Activated CD4-positive, alpha-beta memory T cell treated with anti-CD3 and anti-CD28 coated beads, Interleukin-2, amount 10 ng/mL, durations not matched to agents 7 days and 5 days (primary cell): ENCODE measurements at regions of chr11 and their contacts with region 1.

Region 1: DNA sequence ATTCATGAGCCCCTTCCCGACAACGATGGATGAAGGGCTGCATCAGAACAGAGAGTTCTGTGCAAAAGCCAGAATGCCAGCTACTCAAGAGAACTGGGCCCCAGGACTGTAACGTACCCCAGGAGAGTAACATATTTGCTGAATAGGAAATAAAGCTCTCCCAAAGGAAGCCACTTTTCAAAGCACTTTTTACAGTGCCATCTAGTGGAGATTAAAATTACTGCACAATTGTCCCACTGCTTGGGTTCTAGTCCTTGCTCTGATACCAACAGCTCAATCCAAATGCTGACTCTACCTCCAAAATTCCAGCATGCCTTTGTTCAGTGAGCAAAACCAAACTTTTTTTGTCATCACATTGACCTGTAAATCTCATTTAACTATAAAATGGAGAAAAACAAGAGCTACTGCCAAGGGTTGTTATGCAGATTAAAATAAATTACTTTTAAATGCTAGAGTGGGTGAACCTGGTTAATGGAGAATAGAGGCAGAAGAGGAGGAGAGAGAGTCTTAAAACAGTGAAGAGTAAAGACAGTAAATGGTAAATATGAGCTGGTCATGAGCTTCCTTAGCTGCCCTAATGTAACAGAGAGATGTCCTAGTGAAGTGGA is 87.6 kb upstream of the FSHB start:
- DNase-seq: no peak
- H3K4me3 Mint-ChIP-seq: no peak overlapping the region
- H3K27ac Mint-ChIP-seq: no peak overlapping the region
- H3K4me1 Mint-ChIP-seq: no peaks in the 10 kb centered on the region
- H3K27me3 Mint-ChIP-seq: peaks cover 2% of the 10 kb centered on the region

Region 2: DNA sequence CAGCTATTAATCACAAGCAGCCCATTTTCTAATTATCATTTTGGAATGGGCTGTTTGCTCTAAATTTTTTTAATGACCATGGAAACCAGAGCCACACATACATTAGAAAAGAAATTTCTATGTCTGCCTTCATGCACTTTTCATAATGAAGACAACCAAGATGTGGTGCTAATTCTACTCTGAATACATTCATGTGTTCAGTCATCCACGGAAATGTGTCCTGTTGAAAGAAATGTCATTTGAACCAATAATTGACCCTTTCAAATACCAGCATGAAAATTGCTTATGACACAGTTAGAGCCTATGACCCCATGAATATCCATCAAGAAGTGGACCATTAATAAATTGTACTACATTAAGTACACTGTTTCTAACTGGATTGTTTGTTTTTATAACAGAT is 26.7 kb before region 1 on chr11:
- CTCF ChIA-PET with region 1: no interaction called
- POLR2A ChIA-PET with region 1: no interaction called
- DNase-seq: no peak
- H3K4me3 Mint-ChIP-seq: no peak overlapping the region
- H3K27ac Mint-ChIP-seq: no peak overlapping the region
- H3K4me1 Mint-ChIP-seq: no peaks in the 10 kb centered on the region
- H3K27me3 Mint-ChIP-seq: no peaks in the 10 kb centered on the region

Region 3: DNA sequence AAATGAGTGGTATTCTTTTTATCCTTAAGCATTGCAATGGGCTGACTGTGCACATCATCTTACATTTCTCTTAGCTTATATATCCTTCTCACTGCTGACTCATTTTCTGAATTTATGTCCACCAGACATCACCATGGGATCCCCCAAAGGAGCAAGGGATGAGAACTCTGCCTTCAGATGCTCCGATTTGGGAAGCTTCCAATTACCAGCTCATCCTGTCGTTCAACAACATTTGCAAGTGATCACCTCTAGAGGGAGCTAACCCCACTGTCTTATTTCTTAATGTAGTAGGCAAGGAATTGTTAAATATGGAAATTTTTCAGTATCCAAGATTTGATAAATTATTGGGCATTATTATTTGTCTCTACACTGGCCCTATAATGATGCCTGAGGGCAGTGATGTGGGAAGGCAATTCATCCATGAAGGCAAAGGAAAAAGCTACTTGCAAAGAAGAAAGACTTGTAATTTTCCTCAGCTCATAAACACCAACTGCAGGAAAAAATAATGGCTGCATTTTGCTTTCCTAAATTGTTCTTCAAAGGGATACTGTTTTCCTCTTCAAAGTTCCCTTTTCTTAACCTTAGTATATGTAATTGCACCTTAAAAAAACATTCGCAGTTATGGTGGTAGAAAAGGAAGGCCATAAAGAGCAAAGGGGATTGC is 14.8 kb before region 1 on chr11:
- CTCF ChIA-PET with region 1: interaction called, 34 read pairs
- POLR2A ChIA-PET with region 1: no interaction called
- DNase-seq: no peak
- H3K4me3 Mint-ChIP-seq: no peak overlapping the region
- H3K27ac Mint-ChIP-seq: no peak overlapping the region
- H3K4me1 Mint-ChIP-seq: no peaks in the 10 kb centered on the region
- H3K27me3 Mint-ChIP-seq: no peaks in the 10 kb centered on the region

Region 4: GRCh38 chr11:30155428-30155827 is 12.2 kb after region 1 on chr11:
- CTCF ChIA-PET with region 1: interaction called, 12 read pairs
- POLR2A ChIA-PET with region 1: no interaction called
- DNase-seq: no peak
- H3K4me3 Mint-ChIP-seq: no peak overlapping the region
- H3K27ac Mint-ChIP-seq: no peak overlapping the region
- H3K4me1 Mint-ChIP-seq: no peaks in the 10 kb centered on the region
- H3K27me3 Mint-ChIP-seq: no peaks in the 10 kb centered on the region

Region 5: GRCh38 chr11:30218278-30218677 is 75.1 kb after region 1 on chr11:
- CTCF ChIA-PET with region 1: no interaction called
- POLR2A ChIA-PET with region 1: no interaction called
- DNase-seq: no peak
- H3K4me3 Mint-ChIP-seq: no peak overlapping the region
- H3K27ac Mint-ChIP-seq: no peak overlapping the region
- H3K4me1 Mint-ChIP-seq: no peaks in the 10 kb centered on the region
- H3K27me3 Mint-ChIP-seq: no peaks in the 10 kb centered on the region